Activated naive CD4-positive, alpha-beta T cell treated with anti-CD3 and anti-CD28 coated beads for 36 hours (primary cell): ENCODE measurements at regions of chr9 and their contacts with region 1.

Region 1: DNA sequence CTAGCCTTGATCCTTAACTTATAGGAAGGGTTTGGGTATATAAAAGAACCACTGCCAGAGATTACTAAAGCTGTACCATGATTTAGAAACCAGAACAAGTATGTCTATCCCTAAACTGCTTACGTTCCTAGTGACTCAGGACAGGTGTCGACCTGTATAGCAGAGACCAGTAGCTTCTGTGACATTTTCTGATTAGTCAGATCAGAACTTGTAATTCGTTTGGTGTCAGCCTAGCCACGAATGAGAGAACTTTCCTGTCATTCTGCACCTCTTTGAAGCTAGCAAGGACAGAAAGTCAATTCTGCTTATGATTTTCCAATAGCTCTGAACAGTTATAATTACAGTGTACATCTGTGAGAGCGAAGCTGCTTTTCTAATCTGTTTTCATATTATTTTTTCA is 39.5 kb downstream of the PRKACG start:
- DNase-seq: peak; percentile 66
- H3K4me3 Mint-ChIP-seq: no peak overlapping the region
- H3K27ac Mint-ChIP-seq: peak overlapping the region; percentile 76
- H3K4me1 Mint-ChIP-seq: peaks cover 38% of the 10 kb centered on the region
- H3K27me3 Mint-ChIP-seq: peaks cover 7% of the 10 kb centered on the region

Region 2: GRCh38 chr9:68779558-68780384 is 194.7 kb before region 1 on chr9:
- CTCF ChIA-PET with region 1: interaction called, 3 read pairs
- intact Hi-C with region 1: loop called (anchors 1 kb)
- DNase-seq: peak; percentile 96
- H3K4me3 Mint-ChIP-seq: no peak overlapping the region
- H3K27ac Mint-ChIP-seq: no peak overlapping the region
- H3K4me1 Mint-ChIP-seq: peaks cover 8% of the 10 kb centered on the region
- H3K27me3 Mint-ChIP-seq: no peaks in the 10 kb centered on the region

Region 3: DNA sequence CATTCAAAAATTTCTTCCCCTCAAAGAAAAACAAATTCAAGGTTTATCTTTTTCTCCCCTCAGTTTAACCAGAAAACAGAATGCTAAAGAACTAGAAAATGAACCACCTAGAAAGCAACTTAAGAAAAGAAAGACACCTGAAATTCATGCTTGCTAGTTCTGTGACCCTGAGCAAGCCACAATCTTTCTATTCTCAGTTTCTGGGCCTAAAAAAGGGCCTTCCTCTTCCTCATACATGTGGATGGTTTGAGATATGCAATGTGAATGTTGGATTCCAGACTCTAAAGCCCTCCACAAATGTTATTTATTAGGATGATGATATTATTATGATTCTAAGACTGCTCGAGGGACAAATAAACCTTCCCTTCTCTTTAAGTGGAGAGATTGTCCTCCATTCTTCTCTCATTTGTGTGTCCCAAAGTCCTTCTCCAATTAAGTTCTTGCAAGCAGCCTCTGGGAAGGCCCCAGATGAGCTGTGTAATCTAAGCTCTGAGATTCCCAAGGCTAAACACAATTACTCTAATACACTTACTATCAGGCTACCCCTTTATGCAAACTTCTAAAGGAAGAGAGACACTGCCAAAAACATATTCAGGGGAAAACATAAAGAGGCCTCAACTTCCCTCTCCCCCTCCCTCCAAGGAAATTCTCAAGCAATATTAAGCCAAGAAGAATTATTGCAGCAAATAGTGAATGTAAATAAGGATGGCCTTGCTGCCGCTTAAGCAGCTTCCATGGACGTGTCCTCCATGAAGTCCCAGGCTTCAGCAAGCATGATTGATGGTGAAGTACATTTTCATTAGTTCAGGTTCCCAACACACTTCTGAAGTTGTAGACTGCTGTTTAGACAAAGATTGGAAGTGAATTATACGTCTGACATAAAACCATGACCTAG is 40.8 kb before region 1 on chr9:
- CTCF ChIA-PET with region 1: no interaction called
- intact Hi-C with region 1: loop called (anchors 2 kb)
- DNase-seq: no peak
- H3K4me3 Mint-ChIP-seq: no peak overlapping the region
- H3K27ac Mint-ChIP-seq: no peak overlapping the region
- H3K4me1 Mint-ChIP-seq: peaks cover 18% of the 10 kb centered on the region
- H3K27me3 Mint-ChIP-seq: peaks cover 27% of the 10 kb centered on the region

Region 4: GRCh38 chr9:68999393-69000105 is 25.1 kb after region 1 on chr9:
- CTCF ChIA-PET with region 1: interaction called, 7 read pairs
- intact Hi-C with region 1: loop called (anchors 1 kb)
- DNase-seq: peak; percentile 79
- H3K4me3 Mint-ChIP-seq: no peak overlapping the region
- H3K27ac Mint-ChIP-seq: no peak overlapping the region
- H3K4me1 Mint-ChIP-seq: peaks cover 18% of the 10 kb centered on the region
- H3K27me3 Mint-ChIP-seq: no peaks in the 10 kb centered on the region

Region 5: GRCh38 chr9:69174616-69175463 is 200.4 kb after region 1 on chr9:
- CTCF ChIA-PET with region 1: no interaction called
- intact Hi-C with region 1: loop called (anchors 2 kb)
- DNase-seq: peak; percentile 84
- H3K4me3 Mint-ChIP-seq: peak overlapping the region; percentile 77
- H3K27ac Mint-ChIP-seq: peak overlapping the region; percentile 37
- H3K4me1 Mint-ChIP-seq: peaks cover 39% of the 10 kb centered on the region
- H3K27me3 Mint-ChIP-seq: peaks cover 43% of the 10 kb centered on the region